HepG2 (cell line): ENCODE measurements at regions of chr3 and their contacts with region 1.

Region 1: GRCh38 chr3:129942296-129942695 is 32.2 kb upstream of the TRH start:
- DNase-seq: peak; percentile 58
- ATAC-seq: peak; percentile 87
- H3K4me3 ChIP-seq: no peak overlapping the region
- H3K27ac ChIP-seq: no peak overlapping the region
- H3K4me1 ChIP-seq: peaks cover 14% of the 10 kb centered on the region
- H3K27me3 ChIP-seq: peaks cover 0 to 2% of the 10 kb centered on the region in 2 experiments; a peak in 2 of 5 replicates
- CTCF ChIP-seq: peak; percentile 93
- EP300 ChIP-seq: no peak
- POLR2A ChIP-seq: no peak
- RAD21 ChIP-seq: peak; percentile 90

Region 2: DNA sequence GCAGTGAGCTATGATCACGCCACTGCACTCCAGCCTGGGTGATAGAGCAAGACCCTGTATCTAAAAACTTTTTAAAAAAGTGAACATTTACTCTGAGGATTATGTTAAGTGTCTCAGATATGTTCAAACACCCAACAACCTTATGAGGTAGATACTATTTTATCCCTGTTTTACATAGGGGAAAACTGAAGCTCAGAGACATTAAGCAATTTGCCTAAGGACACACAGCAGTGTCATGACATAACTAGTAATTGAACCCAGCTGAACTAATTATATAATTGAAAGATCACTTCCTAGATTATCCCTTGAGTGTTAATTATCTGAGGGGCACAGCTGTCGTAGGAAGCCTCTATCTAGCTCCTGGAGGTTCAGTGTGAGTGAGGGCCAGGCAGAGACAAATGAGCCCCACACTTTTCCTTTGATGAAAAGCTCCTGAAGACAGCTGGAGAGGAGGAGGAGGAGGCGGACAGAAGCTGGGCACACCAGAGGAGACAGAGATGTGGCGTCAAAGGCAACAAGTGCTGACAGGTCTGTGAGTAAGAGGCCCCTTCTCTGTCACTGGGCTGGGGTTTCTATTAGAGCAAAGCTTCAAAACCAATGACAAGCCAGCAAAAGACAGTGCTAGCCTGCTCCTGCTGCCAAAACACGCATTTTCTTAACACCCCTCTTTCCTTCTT is 52.7 kb after region 1 on chr3:
- CTCF ChIA-PET with region 1: interaction called, 6 read pairs
- POLR2A ChIA-PET with region 1: no interaction called
- in situ Hi-C with region 1: loop called (anchors 5 kb)
- intact Hi-C with region 1: no loop called
- DNase-seq: no peak
- ATAC-seq: no peak
- H3K4me3 ChIP-seq: no peak overlapping the region
- H3K27ac ChIP-seq: no peak overlapping the region
- H3K4me1 ChIP-seq: no peaks in the 10 kb centered on the region
- H3K27me3 ChIP-seq: peaks cover 1 to 24% of the 10 kb centered on the region in 2 experiments; a peak in 4 of 5 replicates
- CTCF ChIP-seq: no peak
- EP300 ChIP-seq: no peak
- POLR2A ChIP-seq: no peak
- RAD21 ChIP-seq: no peak

Region 3: GRCh38 chr3:130093741-130094391 is 151.6 kb after region 1 on chr3:
- CTCF ChIA-PET with region 1: interaction called, 13 read pairs
- POLR2A ChIA-PET with region 1: no interaction called
- in situ Hi-C with region 1: loop called (anchors 10 kb)
- intact Hi-C with region 1: loop called (anchors 1 kb)
- DNase-seq: no peak
- ATAC-seq: no peak
- H3K4me3 ChIP-seq: peak overlapping the region in 1 of 3 experiments; percentile 4; a peak in 1 of 6 replicates
- H3K27ac ChIP-seq: no peak overlapping the region
- H3K4me1 ChIP-seq: peaks cover 6% of the 10 kb centered on the region; the same call in 1 of the 2 replicates
- H3K27me3 ChIP-seq: no peaks in the 10 kb centered on the region
- CTCF ChIP-seq: no peak
- EP300 ChIP-seq: no peak
- POLR2A ChIP-seq: no peak
- RAD21 ChIP-seq: no peak